ENCODE measurements at regions of chr17 and their contacts with region 1.

Region 1: DNA sequence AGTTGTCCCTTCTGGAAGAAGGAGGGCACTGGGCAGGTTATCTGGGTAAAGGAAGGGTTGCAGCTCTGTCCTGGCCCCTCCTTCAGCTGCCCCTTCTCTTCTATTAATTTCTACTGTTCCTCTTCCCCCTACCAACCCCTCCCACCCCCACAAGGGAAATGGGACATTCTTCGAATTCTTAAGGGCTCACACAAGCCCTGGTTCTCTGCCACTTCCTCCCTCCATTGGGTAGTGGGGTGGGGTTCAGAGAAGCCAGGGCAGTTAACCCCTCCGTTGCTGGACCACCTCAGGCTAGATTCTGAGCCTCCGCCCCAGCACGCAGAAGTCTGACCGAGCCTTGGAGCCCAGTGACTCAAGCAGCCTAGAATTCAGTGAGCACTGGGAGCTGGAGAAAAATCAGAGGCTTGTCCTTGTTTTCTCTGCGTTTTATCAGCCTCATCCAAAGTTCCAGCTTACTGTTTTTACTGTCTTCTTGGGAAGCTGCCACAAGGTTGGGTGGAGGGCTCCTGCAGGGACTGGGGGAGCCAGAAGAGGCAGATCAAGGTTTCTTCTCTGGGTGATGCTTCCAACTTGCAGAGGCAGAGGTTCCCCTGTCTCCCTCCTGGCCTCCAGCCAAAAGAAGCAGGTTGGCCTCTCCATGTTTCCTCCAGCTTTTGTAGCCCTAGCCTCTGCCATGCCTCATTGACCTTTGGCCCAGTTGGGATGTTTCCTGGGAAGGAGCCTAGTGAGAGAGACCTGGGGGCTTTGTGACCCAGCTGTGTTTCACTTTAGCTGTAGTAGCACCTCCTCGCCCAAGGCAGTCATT is 10.2 kb downstream of the LASP1 start:
- DNase-seq: peak in 3 of 10 donors; percentile 54 to 70 (median 54)
- ATAC-seq: peak; percentile 24 to 30
- H3K4me3 Mint-ChIP-seq: peak overlapping the region; percentile 56 to 89 (median 79)
- H3K27ac Mint-ChIP-seq: peak overlapping the region; percentile 72 to 96 (median 92)
- H3K4me1 Mint-ChIP-seq: peaks cover 59 to 95% (median 90%) of the 10 kb centered on the region in 4 donors
- H3K27me3 Mint-ChIP-seq: no peaks in the 10 kb centered on the region

Region 2: DNA sequence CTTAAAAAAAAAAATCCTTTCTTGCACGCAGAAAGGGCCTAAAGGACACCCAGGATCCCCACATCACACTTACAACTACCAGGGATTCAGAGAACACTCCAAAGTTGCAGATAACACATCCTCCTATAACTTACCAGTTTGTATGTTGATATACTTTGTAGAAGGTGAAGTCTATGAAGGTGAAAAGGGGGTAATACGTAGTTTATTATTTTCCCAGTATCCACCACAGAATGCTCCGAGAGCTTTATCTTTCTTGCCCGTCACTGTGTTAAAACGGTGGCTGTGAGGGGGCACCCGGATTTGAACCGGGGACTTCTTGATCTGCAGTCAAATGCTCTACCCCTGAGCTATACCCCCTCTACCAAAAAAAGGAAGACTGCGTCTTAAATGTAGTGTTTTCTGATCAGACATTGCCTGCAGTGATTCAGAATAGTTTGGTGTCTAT is 18.7 kb before region 1 on chr17:
- POLR2A ChIA-PET with region 1: no interaction called
- DNase-seq: no peak
- ATAC-seq: peak; percentile 37 to 59
- H3K4me3 Mint-ChIP-seq: no peak overlapping the region
- H3K27ac Mint-ChIP-seq: peak overlapping the region in 2 of 10 donors; percentile 8 to 22
- H3K4me1 Mint-ChIP-seq: peaks cover 0 to 15% (median 4%) of the 10 kb centered on the region in 4 donors
- H3K27me3 Mint-ChIP-seq: no peaks in the 10 kb centered on the region

Region 3: DNA sequence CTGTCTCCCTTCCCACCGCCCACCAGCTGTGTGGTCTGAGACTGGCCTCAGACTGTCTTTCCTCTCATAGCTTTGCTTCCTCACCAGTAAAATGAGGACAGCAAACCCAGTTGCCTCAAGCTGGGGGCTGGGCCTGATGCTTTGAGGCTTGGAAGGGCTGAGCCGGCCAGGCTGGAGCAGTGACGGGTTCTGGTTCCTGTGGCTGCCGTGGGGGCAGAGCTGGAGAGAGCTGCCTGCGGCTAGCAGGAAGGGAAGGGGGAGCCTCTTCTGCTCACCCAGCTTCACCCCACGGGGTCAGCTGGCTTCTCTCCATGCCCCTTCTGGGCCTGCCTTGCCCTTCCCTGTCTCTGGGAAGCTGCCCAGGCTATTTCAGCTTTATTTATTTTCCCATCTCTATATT is 13.5 kb after region 1 on chr17:
- POLR2A ChIA-PET with region 1: interaction called, 159 read pairs
- DNase-seq: peak in 1 of 10 donors; percentile 44
- ATAC-seq: peak in 1 of 2 donors; percentile 18
- H3K4me3 Mint-ChIP-seq: peak overlapping the region in 7 of 10 donors; percentile 7 to 75 (median 55)
- H3K27ac Mint-ChIP-seq: peak overlapping the region; percentile 66 to 99 (median 92)
- H3K4me1 Mint-ChIP-seq: peaks cover 34 to 90% (median 85%) of the 10 kb centered on the region in 4 donors
- H3K27me3 Mint-ChIP-seq: no peaks in the 10 kb centered on the region